ENCODE measurements at regions of chr1 and their contacts with region 1.

Region 1: DNA sequence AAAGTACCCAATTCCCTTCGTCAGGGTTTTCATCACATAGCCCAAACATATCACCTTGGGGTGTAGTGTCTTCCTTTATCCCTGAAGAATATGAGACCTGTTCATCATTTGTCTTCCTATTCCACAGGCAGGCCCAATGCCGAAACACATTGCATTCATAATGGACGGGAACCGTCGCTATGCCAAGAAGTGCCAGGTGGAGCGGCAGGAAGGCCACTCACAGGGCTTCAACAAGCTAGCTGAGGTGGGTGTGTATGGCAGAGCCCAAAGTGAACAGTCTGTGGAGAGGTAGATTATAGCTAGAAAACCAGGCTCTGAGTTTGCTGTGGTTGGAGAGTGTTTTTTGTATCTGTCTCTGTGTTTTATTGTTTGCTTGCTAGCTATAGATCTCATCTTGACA is 5.9 kb downstream of the DHDDS start:
- DNase-seq: no peak
- H3K4me3 ChIP-seq: no peak overlapping the region
- H3K27ac ChIP-seq: no peak overlapping the region
- H3K4me1 ChIP-seq: peaks cover 0 to 8% of the 10 kb centered on the region in 2 donors
- H3K27me3 ChIP-seq: no peaks in the 10 kb centered on the region
- CTCF ChIP-seq: no peak
- POLR2A ChIP-seq: no peak

Region 2: DNA sequence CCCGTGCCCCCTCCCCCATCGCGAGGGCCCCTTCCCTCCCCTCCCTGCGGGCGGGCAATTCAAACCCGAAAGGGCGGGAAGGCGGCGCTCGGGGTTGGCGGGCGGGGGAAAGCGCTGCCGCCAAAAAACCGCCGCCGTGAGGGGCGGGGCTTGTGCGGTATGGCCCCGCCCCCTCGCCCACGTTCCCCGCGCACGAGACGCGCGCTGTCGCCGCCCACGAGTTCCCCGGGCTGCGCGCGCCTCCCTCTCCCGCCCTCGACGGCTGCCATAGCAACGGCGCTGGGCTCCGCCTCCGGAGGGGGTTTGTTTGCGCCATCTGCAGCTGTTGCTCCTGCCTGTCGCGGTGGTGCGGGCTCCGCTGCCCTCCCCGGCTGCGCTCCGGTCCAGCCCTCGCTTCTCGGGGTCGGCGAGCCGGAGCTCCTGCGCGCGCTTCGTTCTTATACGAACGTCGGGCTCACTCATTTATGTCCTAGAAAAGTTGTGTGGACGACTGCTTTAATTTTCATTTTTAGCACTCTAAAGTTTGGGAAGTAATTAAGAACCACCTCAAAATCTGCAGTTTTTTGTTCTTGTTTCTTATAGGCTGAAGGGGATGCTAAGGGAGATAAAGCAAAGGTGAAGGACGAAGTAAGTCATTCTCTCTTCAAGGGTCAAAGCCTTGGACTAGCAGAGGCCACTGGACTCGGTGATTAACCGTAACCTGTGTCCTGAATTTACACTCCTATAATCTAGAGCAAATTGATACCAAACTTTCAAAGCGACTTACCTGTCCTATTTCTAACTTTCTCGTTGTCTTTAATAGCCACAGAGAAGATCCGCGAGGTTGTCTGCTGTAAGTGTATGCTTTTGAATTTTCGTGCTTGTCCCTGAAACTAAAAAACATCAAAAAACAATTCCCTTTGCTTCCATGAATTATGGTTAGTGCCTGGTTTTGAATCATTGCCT is 35.1 kb after region 1 on chr1:
- intact Hi-C with region 1: loop called (anchors 5 kb)
- DNase-seq: peak; percentile 95 to 96
- H3K4me3 ChIP-seq: peak overlapping the region; percentile 94 to 99 (median 98)
- H3K27ac ChIP-seq: peak overlapping the region; percentile 99 to 100 (median 100)
- H3K4me1 ChIP-seq: peaks cover 15 to 26% of the 10 kb centered on the region in 2 donors
- H3K27me3 ChIP-seq: no peaks in the 10 kb centered on the region
- CTCF ChIP-seq: no peak
- POLR2A ChIP-seq: peak in 1 of 2 donors; percentile 80

Region 3: GRCh38 chr1:26630634-26631033 is 192.6 kb after region 1 on chr1:
- intact Hi-C with region 1: no loop called
- DNase-seq: no peak
- H3K4me3 ChIP-seq: no peak overlapping the region
- H3K27ac ChIP-seq: no peak overlapping the region
- H3K4me1 ChIP-seq: peaks cover 0 to 7% of the 10 kb centered on the region in 2 donors
- H3K27me3 ChIP-seq: no peaks in the 10 kb centered on the region
- CTCF ChIP-seq: no peak
- POLR2A ChIP-seq: no peak